ENCODE measurements at regions of chr10 and their contacts with region 1.

Region 1: DNA sequence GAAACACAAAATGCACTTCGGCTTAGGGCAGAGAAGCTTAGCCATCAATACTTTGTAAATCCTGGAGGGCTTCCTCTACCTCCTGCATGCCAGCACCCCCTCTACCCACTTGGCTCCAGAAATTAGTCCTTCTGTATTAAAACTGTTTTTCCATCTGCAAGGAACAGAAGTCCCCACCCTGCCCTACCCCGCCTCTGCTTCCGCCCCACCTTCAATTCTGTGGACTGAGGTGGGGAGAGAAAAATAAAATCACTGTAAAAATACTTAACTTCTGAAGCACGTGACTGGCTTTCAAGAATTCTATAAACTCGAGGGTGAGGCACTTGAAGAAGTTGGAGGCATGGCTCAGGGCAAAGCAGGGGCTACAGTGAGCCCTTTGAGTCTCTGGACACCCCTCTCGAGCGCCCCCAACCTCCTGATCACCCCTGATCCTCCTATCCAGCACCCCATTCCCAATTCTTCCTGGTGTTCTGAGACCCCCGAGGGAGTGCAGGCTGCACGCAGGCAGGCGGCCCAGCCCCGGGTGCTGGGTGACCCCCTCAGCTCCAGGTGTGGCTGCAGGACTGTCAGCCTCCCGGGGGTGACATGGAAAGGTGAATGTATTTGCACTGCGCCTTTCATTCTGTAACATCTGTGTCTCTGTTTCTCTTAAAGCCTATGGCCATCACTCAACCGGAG is 7.3 kb upstream of the KIAA1217 start:
- DNase-seq: no peak
- H3K4me3 ChIP-seq: no peak overlapping the region
- H3K27ac ChIP-seq: no peak overlapping the region
- H3K4me1 ChIP-seq: peaks cover 0 to 1% (median 0%) of the 10 kb centered on the region in 4 donors
- H3K27me3 ChIP-seq: no peaks in the 10 kb centered on the region
- CTCF ChIP-seq: no peak
- EP300 ChIP-seq: no peak
- POLR2A ChIP-seq: no peak

Region 2: DNA sequence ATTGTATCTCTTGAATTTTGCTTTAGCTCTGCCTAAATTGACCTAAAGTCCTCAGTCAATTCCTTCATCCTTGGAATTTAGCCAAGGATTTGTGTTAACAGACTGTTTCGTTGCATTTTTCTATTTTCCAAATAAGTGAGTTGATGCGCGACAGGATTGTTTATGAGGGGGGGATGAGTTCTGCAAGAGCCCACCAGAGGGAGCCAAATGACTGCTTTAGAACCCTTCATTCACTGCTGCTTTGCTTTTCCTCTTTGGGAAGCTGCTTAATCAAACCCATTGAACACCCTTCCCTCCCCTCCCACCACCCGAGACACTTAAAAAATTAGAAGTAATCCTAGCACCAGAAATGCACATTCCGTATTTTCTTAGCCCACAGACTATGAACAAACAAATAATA is 1043.3 kb before region 1 on chr10:
- intact Hi-C with region 1: loop called (anchors 5 kb)
- DNase-seq: no peak
- H3K4me3 ChIP-seq: peak overlapping the region in 1 of 4 donors; percentile 12
- H3K27ac ChIP-seq: no peak overlapping the region
- H3K4me1 ChIP-seq: no peaks in the 10 kb centered on the region
- H3K27me3 ChIP-seq: peaks cover 0 to 7% (median 2%) of the 10 kb centered on the region in 3 donors
- CTCF ChIP-seq: peak in 3 of 4 experiments; percentile 48 to 76 (median 60)
- EP300 ChIP-seq: no peak
- POLR2A ChIP-seq: no peak

Region 3: DNA sequence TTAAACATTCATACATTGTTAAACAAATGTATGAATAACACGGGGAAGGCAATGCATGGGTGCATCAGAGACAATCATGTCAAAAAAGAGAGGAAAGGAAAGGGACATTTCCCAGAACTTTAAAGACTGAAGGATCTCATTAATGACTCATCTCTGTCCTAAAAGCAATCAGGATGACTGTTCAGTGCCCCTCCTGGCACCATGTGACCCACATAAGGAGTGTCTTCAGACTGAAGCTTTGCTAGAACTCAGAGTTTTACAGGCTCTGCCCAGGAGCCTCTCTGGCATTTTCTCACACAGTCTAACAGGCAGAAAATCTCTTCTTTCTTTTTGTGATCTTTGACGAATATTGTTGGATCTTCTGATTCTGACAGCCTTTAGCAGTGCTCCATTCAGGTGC is 447.5 kb before region 1 on chr10:
- intact Hi-C with region 1: no loop called
- DNase-seq: no peak
- H3K4me3 ChIP-seq: no peak overlapping the region
- H3K27ac ChIP-seq: no peak overlapping the region
- H3K4me1 ChIP-seq: no peaks in the 10 kb centered on the region
- H3K27me3 ChIP-seq: no peaks in the 10 kb centered on the region
- CTCF ChIP-seq: no peak
- EP300 ChIP-seq: no peak
- POLR2A ChIP-seq: no peak

Region 4: DNA sequence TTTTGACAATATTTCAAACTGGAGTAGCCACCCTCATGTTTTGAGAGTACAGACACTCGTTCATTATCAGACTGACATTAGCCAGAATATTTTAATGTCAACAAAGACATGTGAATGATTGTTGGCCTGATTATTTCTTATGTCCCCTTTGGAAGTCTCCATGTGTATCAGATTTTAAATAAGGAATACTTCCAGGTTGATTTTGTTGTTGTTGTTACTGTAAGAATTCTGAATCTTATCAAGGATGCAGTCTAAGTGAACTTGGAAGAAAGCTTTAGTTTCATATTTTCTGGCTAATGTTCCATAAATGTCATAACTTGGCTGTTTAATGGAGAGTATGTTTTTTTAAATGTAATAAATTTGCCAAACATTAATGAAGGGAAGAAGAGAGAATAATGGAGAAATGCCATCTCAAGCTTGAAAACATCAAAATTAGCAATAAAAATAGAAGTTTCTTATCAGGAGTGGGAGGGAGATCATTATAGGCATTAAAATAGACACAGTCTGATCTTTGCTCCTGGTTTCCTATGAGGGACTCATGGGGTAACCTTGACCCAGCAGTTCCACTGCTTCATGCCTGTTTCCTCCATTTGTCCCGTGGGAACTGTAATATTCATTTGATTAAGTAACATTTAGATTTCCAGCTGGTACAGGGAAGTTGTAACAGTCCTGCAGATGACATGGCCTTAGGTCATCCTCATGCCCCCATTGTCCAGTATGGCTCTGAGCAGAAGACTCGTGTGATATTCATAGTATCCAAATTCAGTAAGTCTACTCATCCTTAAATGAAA is 115.2 kb before region 1 on chr10:
- intact Hi-C with region 1: no loop called
- DNase-seq: no peak
- H3K4me3 ChIP-seq: no peak overlapping the region
- H3K27ac ChIP-seq: no peak overlapping the region
- H3K4me1 ChIP-seq: no peaks in the 10 kb centered on the region
- H3K27me3 ChIP-seq: no peaks in the 10 kb centered on the region
- CTCF ChIP-seq: no peak
- EP300 ChIP-seq: no peak
- POLR2A ChIP-seq: no peak